ENCODE measurements at regions of chr21 and their contacts with region 1.

Region 1: DNA sequence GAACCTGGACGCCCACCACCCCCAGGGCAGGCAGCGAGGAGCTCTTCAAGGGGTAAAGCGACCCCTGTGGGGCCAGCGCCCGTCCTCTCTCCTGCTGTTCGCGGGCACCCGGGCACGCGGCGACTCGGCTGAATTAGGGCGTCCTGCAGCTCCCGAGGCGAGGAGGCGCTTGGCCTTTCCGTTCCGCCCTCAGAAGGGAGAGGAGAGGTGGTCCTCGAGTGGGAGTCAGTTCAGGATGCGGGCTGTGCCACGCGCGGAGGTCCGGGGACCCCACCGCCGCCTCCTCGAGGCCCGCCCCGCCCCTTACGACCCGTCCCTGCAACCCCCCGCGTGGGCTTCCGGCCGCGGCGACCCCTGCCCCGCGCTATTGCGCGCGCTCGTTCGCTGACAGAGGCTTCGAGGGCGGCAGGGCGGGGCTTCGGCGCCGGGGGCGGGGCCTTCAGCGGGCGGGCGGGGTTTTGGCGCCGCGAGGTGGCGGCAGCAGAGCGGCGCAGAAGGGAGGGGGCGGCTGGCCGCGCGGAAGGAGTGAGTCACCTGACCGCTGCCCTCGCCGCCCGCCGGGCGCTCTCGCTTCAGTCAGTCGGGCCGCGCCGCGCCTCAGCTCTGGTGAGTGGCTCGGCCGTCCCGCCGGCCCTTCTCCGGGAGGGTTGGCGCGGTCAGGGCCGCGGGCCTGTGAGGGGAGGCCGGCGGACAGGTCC is at the start of gene BACH1:
- DNase-seq: peak; percentile 89
- H3K4me3 ChIP-seq: peak within 1 kb of the TSS; percentile 52 to 90 (median 75)
- H3K27ac ChIP-seq: peak within 1 kb of the TSS; percentile 62
- H3K4me1 ChIP-seq: peaks cover 17% of the 10 kb centered on the region
- H3K27me3 ChIP-seq: no peaks in the 10 kb centered on the region
- CTCF ChIP-seq: peak; percentile 19 to 48
- POLR2A ChIP-seq: peak; percentile 89
- total RNA-seq, gene BACH1: 28.8 and 30.3 TPM in 2 replicates

Region 2: DNA sequence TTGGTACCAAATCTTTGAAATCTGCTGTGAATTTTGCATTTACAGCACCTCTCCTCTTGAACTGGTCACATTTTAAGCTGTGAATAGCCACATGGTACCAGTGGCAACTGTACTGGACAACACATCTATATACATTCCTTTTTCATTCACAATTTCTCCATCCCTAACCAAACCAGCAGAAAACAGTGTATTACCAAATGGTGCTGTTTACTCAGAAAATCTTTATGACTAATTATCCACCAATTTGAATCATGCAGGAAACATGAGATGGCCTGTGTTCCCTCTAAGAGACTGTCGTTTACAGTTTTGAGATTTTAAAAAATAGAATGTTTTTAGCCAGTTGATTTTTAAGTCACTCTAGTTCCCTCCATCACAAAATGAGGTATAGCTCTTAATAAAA is 207.5 kb before region 1 on chr21:
- CTCF ChIA-PET with region 1: interaction called, 4 read pairs
- POLR2A ChIA-PET with region 1: no interaction called
- dilution Hi-C with region 1: no loop called
- intact Hi-C with region 1: loop called (anchors 1 kb)
- DNase-seq: peak; percentile 63
- H3K4me3 ChIP-seq: no peak overlapping the region
- H3K27ac ChIP-seq: peak overlapping the region; percentile 65
- H3K4me1 ChIP-seq: peaks cover 22% of the 10 kb centered on the region
- H3K27me3 ChIP-seq: no peaks in the 10 kb centered on the region
- CTCF ChIP-seq: no peak
- POLR2A ChIP-seq: no peak

Region 3: DNA sequence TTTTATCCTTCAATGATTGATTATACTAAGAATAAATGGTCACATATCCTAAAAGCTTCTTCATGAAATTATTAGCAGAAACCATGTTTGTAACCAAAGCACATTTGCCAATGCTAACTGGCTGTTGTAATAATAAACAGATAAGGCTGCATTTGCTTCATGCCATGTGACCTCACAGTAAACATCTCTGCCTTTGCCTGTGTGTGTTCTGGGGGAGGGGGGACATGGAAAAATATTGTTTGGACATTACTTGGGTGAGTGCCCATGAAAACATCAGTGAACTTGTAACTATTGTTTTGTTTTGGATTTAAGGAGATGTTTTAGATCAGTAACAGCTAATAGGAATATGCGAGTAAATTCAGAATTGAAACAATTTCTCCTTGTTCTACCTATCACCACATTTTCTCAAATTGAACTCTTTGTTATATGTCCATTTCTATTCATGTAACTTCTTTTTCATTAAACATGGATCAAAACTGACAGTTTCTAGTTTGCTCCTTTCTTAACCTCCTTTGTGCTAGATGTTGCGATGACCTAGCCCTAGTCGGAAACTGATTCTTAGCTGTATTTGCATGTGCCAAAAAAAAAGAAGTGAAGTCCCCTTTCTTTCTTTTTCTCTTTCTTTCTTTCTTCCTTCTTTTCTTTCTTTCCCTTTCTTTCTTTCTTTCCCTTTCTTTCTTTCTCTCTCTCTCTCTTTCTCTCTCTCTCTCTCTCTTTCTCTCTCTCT is 122.9 kb before region 1 on chr21:
- CTCF ChIA-PET with region 1: interaction called, 6 read pairs
- POLR2A ChIA-PET with region 1: interaction called, 5 read pairs
- dilution Hi-C with region 1: no loop called
- intact Hi-C with region 1: loop called (anchors 2 kb)
- DNase-seq: peak; percentile 98
- H3K4me3 ChIP-seq: peak overlapping the region in 1 of 3 experiments; percentile 10
- H3K27ac ChIP-seq: peak overlapping the region; percentile 63
- H3K4me1 ChIP-seq: peaks cover 26% of the 10 kb centered on the region
- H3K27me3 ChIP-seq: no peaks in the 10 kb centered on the region
- CTCF ChIP-seq: no peak
- POLR2A ChIP-seq: no peak

Region 4: GRCh38 chr21:29208682-29209059 is 89.8 kb before region 1 on chr21:
- CTCF ChIA-PET with region 1: interaction called, 5 read pairs
- POLR2A ChIA-PET with region 1: interaction called, 10 read pairs
- dilution Hi-C with region 1: no loop called
- intact Hi-C with region 1: loop called (anchors 1 kb)
- DNase-seq: peak; percentile 84
- H3K4me3 ChIP-seq: peak overlapping the region in 1 of 3 experiments; percentile 38
- H3K27ac ChIP-seq: peak overlapping the region; percentile 97
- H3K4me1 ChIP-seq: peaks cover 31% of the 10 kb centered on the region
- H3K27me3 ChIP-seq: no peaks in the 10 kb centered on the region
- CTCF ChIP-seq: no peak
- POLR2A ChIP-seq: no peak

Region 5: DNA sequence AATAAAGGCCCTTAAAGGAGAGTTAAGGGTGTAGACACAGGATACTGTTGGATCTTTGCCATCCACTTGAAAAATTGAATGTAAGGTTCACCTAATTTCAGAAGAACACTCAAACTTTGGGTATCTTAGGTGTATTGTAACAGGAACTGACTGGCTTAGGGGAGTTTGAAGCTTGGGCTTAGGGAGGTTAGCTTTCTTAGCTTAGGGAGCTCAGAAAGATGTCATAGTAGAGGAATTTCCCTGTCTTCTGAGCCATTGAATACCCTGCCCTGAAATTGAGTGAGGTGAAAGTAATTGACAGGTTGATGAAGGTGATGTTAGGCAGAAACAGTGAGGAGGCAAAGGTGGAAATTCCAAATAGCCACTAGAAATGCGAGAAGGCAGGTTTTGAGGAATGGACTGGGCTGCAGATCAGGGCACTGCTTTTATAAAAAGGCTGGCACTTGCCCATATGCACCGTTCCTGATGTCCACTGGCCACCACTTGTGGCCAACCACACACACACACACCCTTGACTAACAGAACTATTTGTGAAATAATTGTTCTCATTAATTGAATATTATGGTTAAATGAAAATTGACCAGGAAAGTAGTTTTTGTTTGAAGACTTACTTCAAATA is 16.7 kb after region 1 on chr21:
- CTCF ChIA-PET with region 1: interaction called, 18 read pairs
- POLR2A ChIA-PET with region 1: interaction called, 7 read pairs
- dilution Hi-C with region 1: no loop called
- intact Hi-C with region 1: no loop called
- DNase-seq: no peak
- H3K4me3 ChIP-seq: no peak overlapping the region
- H3K27ac ChIP-seq: no peak overlapping the region
- H3K4me1 ChIP-seq: peaks cover 19% of the 10 kb centered on the region
- H3K27me3 ChIP-seq: no peaks in the 10 kb centered on the region
- CTCF ChIP-seq: no peak
- POLR2A ChIP-seq: no peak

Measured in endothelial cell of umbilical vein (primary cell).